ENCODE measurements at regions of chr3 and their contacts with region 1.

Region 1: GRCh38 chr3:45010718-45011366 is 15.3 kb upstream of the CLEC3B start:
- DNase-seq: no peak
- ATAC-seq: no peak
- H3K4me3 Mint-ChIP-seq: no peak overlapping the region
- H3K27ac Mint-ChIP-seq: peak overlapping the region in 1 of 10 donors; percentile 11
- H3K4me1 Mint-ChIP-seq: peaks cover 8 to 25% (median 14%) of the 10 kb centered on the region in 4 donors
- H3K27me3 Mint-ChIP-seq: no peaks in the 10 kb centered on the region

Region 2: DNA sequence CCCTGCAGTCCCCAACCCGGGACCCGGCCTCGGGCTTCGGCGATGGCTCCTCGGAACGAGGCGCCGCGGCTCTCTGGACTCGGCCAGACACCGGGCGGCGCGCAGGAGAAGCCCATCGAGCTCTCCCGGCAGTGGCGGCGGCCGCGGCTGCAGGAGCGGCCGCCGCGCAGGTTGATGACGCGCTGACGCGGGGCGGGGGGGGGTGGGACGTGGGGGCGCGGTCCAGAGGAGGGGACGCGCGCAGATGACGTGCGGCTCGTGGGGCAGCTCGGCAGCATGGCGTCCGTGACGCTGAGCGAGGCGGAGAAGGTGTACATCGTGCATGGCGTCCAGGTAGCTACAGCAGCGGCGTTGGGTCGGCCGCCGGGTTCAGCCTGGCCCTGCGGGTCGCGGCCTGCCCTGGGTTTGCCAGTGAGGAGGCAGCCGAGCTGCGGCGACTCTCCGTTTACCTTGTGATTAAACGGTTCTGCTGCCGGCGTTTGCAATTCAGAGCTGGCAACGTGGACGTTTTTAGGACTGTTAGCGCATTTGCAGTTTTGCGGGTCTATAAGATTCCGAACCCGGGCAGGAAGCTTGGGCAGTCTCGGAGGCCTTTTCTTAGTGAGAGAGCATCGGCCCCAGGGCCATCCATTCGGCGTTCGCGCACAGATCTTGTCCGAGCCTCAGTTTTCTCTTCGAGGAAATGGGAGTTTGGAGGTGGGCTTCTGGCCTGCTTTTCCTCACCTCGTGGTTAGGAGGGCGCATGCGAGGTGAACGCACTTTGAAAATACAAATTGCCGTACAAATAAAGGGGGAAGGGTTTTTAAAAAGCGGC is 34.6 kb before region 1 on chr3 and contains the starts of genes EXOSC7 and ZDHHC3:
- POLR2A ChIA-PET with region 1: interaction called, 19 read pairs
- DNase-seq: peak; percentile 79 to 90 (median 86)
- ATAC-seq: peak; percentile 93 to 95
- H3K4me3 Mint-ChIP-seq: peak within 1 kb of the TSS; percentile 89 to 95 (median 94)
- H3K27ac Mint-ChIP-seq: peak within 1 kb of the TSS; percentile 85 to 98 (median 96)
- H3K4me1 Mint-ChIP-seq: peaks cover 29 to 78% (median 69%) of the 10 kb centered on the region in 4 donors
- H3K27me3 Mint-ChIP-seq: no peaks in the 10 kb centered on the region
- polyA plus RNA-seq, gene EXOSC7: 46.0 to 55.5 (median 49.1) TPM
- polyA plus RNA-seq, gene ZDHHC3: 28.0 to 35.7 (median 33.0) TPM

Region 3: GRCh38 chr3:45199837-45200648 is 189.2 kb after region 1 on chr3:
- POLR2A ChIA-PET with region 1: no interaction called
- DNase-seq: no peak
- ATAC-seq: no peak
- H3K4me3 Mint-ChIP-seq: no peak overlapping the region
- H3K27ac Mint-ChIP-seq: no peak overlapping the region
- H3K4me1 Mint-ChIP-seq: no peaks in the 10 kb centered on the region
- H3K27me3 Mint-ChIP-seq: peaks cover 10 to 45% (median 13%) of the 10 kb centered on the region in 5 donors